HEK293 (cell line): ENCODE measurements at regions of chr1 and their contacts with region 1.

Region 1: DNA sequence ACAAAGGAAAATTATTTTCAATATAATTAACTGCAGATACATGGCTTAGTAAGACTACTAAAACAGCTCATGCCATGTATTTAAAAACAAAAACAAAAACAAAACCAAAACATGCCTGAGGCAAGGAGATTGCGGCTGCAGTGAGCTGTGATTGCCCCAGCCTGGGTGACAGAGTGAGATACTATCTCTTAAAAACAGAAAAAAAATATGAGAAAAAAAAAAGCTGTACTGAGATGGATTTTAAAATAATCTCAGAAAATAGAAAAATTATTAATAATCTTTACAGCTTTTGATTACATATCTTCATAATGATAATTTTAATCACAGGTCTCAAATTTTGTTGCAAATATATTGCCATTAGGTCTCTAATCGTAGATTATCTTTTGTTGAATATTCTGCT is 24.0 kb upstream of the LIN9 start:
- H3K4me3 ChIP-seq: peak overlapping the region; percentile 25; the same call in 1 of the 2 replicates
- H3K27ac ChIP-seq: no peak overlapping the region
- H3K4me1 ChIP-seq: peaks cover 3% of the 10 kb centered on the region; the same call in 1 of the 2 replicates
- CTCF ChIP-seq: no peak

Region 2: DNA sequence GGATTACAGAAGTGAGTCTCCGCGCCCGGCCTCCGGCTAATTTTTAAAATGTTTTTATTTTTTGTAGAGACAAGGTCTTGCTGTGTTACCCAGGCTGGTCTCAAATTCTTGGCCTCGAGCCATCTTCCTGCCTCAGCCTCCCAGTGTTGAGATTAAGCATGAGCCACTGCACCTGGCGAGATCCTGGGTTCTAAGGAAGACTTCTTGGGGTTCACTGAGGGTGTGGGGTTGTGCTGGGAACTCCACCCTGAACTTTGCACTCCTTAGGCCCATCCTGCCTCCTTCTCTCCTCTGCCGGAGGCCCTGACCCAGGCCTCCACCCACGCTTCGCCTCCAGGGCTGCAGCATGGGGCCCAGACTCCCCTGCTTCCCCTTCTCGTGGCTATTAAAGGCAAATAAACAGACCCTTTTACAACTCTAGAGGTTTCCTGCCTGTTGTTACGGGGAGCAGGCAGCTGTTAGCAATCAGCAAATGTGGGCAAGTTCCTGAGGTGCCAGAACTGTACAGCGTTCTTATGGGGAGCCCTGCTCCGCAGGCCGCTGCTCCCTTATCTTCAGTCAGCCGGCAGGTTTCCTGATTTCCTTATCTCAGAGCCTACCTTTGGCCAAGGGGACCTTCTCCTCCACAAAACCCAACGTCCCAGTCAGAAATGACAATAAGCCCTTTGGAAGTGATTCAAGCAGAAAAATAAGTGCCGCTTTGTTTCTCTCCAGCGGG is 17.0 kb after region 1 on chr1:
- CTCF ChIA-PET with region 1: interaction called, 11 read pairs
- POLR2A ChIA-PET with region 1: no interaction called
- H3K4me3 ChIP-seq: no peak overlapping the region
- H3K27ac ChIP-seq: 0 out of 2 replicates have a peak overlapping the region, but pooled peaks have one; percentile 2
- H3K4me1 ChIP-seq: no peaks in the 10 kb centered on the region; the same call in 1 of the 2 replicates
- CTCF ChIP-seq: no peak

Region 3: GRCh38 chr1:226390326-226391080 is 57.6 kb after region 1 on chr1:
- CTCF ChIA-PET with region 1: no interaction called
- POLR2A ChIA-PET with region 1: no interaction called
- H3K4me3 ChIP-seq: no peak overlapping the region
- H3K27ac ChIP-seq: no peak overlapping the region
- H3K4me1 ChIP-seq: no peaks in the 10 kb centered on the region
- CTCF ChIP-seq: no peak

Region 4: GRCh38 chr1:226846801-226847200 is 513.9 kb after region 1 on chr1:
- CTCF ChIA-PET with region 1: no interaction called
- POLR2A ChIA-PET with region 1: no interaction called
- H3K4me3 ChIP-seq: no peak overlapping the region
- H3K27ac ChIP-seq: no peak overlapping the region
- H3K4me1 ChIP-seq: no peaks in the 10 kb centered on the region
- CTCF ChIP-seq: no peak